ENCODE measurements at regions of chr6 and their contacts with region 1.

Region 1: GRCh38 chr6:155174576-155175211 is 89.1 kb upstream of the CLDN20 start:
- DNase-seq: peak; percentile 79
- ATAC-seq: peak; percentile 55
- H3K4me3 Mint-ChIP-seq: no peak overlapping the region
- H3K27ac Mint-ChIP-seq: peak overlapping the region; percentile 33
- H3K4me1 Mint-ChIP-seq: peaks cover 46% of the 10 kb centered on the region
- H3K27me3 Mint-ChIP-seq: no peaks in the 10 kb centered on the region
- CTCF ChIP-seq: peak; percentile 75

Region 2: DNA sequence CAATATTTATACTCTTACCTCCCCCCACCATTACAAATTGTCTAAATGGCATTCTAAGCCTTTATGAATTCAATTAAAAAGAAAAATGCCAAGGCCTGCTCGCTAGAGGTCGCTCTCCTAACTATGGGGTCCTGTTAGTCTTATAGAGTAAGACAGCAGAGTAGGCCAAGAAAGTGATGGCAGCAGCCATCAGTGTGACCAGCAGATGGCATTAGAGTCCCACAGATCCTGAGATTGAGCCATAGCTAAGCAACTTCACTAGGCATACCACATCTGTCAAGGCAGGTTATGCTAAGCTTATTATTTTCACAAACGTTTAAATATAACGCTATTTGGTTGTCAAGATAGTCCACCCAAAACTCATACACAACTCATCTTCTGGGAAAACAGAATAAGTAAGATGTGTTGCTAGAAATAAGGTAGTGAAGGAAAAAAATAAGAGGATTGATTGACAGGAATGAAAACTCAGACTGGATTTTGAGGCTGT is 499.0 kb before region 1 on chr6:
- CTCF ChIA-PET with region 1: interaction called, 8 read pairs
- POLR2A ChIA-PET with region 1: no interaction called
- intact Hi-C with region 1: loop called (anchors 5 kb)
- DNase-seq: peak; percentile 95
- ATAC-seq: peak; percentile 100
- H3K4me3 Mint-ChIP-seq: no peak overlapping the region
- H3K27ac Mint-ChIP-seq: no peak overlapping the region
- H3K4me1 Mint-ChIP-seq: no peaks in the 10 kb centered on the region
- H3K27me3 Mint-ChIP-seq: no peaks in the 10 kb centered on the region
- CTCF ChIP-seq: peak; percentile 99

Region 3: GRCh38 chr6:154882107-154882506 is 292.6 kb before region 1 on chr6:
- CTCF ChIA-PET with region 1: no interaction called
- POLR2A ChIA-PET with region 1: no interaction called
- intact Hi-C with region 1: no loop called
- DNase-seq: no peak
- ATAC-seq: no peak
- H3K4me3 Mint-ChIP-seq: no peak overlapping the region
- H3K27ac Mint-ChIP-seq: no peak overlapping the region
- H3K4me1 Mint-ChIP-seq: peaks cover 3% of the 10 kb centered on the region
- H3K27me3 Mint-ChIP-seq: no peaks in the 10 kb centered on the region
- CTCF ChIP-seq: no peak

Region 4: DNA sequence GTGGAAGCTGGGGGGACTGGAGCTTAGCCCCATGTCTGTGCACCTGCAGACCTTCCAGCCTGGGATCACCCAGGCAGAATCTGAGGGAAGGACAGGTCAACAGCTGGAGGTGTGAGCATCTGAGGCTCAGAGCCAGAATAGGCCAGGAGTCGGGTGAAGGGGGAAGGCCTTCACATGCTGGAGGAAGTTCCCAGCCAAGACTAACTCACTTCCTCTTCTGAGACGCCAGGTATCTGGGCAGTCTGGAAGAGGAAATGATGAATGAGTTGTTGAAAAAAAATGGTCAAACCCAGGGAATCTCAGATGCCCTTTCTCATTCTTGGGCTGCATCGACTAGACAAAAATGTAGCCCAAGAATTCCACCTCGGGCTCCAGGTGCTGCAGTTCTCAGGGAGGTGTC is 253.2 kb before region 1 on chr6:
- CTCF ChIA-PET with region 1: interaction called, 69 read pairs
- POLR2A ChIA-PET with region 1: interaction called, 4 read pairs
- intact Hi-C with region 1: no loop called
- DNase-seq: no peak
- ATAC-seq: no peak
- H3K4me3 Mint-ChIP-seq: no peak overlapping the region
- H3K27ac Mint-ChIP-seq: no peak overlapping the region
- H3K4me1 Mint-ChIP-seq: peaks cover 12% of the 10 kb centered on the region
- H3K27me3 Mint-ChIP-seq: no peaks in the 10 kb centered on the region
- CTCF ChIP-seq: no peak

Region 5: GRCh38 chr6:155100087-155100486 is 74.6 kb before region 1 on chr6:
- CTCF ChIA-PET with region 1: no interaction called
- POLR2A ChIA-PET with region 1: no interaction called
- intact Hi-C with region 1: no loop called
- DNase-seq: no peak
- ATAC-seq: no peak
- H3K4me3 Mint-ChIP-seq: no peak overlapping the region
- H3K27ac Mint-ChIP-seq: no peak overlapping the region
- H3K4me1 Mint-ChIP-seq: peaks cover 8% of the 10 kb centered on the region
- H3K27me3 Mint-ChIP-seq: peaks cover 4% of the 10 kb centered on the region
- CTCF ChIP-seq: no peak

Region 6: DNA sequence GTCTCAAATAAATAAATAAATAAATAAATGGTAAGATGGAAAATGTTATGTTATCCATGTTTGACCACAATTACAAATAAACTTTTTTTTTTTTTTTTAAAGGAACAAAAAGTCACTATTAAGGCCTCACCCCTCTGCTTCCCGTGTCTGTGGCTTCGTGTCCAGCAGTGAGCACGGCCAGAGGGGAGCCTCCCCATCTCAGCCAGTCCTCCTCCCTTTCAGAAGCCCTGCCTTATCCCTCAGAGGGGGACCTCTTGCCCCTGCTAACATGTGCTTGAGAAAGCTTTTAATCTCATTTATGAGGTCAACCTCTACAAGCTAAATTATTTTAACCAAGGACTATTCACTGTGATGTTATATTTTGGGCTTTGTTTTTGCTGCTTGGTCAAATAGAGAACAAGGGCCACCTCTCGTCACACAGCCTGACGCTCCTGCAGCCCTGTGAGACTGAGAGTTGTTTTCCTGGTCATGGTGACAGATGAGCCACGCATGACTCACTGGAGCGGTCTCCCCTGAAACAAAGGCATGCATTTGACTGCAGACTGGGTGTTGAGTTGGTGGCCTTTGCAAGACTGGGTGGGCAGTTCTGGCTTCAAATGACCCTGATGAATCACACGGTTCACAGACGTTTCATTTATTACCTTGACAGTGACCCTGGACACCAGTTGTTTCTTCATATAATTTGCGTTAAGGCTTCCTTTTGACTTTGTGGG is 47.8 kb before region 1 on chr6:
- CTCF ChIA-PET with region 1: interaction called, 5 read pairs
- POLR2A ChIA-PET with region 1: no interaction called
- intact Hi-C with region 1: loop called (anchors 5 kb)
- DNase-seq: peak; percentile 86
- ATAC-seq: peak; percentile 93
- H3K4me3 Mint-ChIP-seq: no peak overlapping the region
- H3K27ac Mint-ChIP-seq: peak overlapping the region; percentile 81
- H3K4me1 Mint-ChIP-seq: peaks cover 33% of the 10 kb centered on the region
- H3K27me3 Mint-ChIP-seq: no peaks in the 10 kb centered on the region
- CTCF ChIP-seq: no peak

Region 7: DNA sequence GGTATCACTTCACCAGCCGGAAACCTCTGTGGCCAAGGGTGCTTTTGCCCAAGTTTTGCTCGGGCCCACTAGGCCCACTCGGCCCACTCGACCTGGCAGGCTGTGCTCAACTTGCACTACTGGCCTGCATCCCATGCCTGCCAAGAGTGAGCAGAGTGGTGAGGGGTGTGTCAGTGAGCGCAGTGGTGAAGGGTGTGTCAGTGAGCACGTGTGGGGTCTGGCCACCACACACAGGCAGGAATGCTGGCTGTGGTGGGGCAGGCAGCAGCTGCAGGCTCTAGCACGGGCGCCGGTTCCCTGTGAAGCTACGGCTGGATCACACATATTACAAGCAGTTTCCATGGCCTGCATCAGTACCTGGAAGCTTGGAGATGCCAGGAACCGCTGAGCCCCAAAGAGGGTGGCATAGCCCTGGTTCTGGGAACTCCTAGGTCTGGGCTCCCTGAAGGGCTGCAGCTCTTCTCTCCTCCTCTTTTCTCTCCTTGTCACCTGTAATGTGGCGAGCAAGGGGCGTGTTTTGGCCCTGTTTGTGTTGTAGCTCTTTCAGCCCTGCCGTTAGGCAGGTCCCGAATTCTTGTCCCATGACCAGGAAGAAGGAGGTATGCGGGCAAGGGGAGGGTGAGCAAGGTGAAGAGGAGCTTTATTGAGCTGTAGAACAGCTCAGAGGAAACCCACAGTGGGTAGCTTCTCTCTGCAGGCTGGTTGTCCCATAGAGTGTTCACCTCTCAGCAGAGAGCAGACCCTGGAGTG is 38.1 kb after region 1 on chr6:
- CTCF ChIA-PET with region 1: no interaction called
- POLR2A ChIA-PET with region 1: no interaction called
- intact Hi-C with region 1: no loop called
- DNase-seq: no peak
- ATAC-seq: no peak
- H3K4me3 Mint-ChIP-seq: no peak overlapping the region
- H3K27ac Mint-ChIP-seq: no peak overlapping the region
- H3K4me1 Mint-ChIP-seq: no peaks in the 10 kb centered on the region
- H3K27me3 Mint-ChIP-seq: peaks cover 5% of the 10 kb centered on the region
- CTCF ChIP-seq: no peak

Region 8: GRCh38 chr6:155248008-155249001 is 73.6 kb after region 1 on chr6:
- CTCF ChIA-PET with region 1: interaction called, 27 read pairs
- POLR2A ChIA-PET with region 1: no interaction called
- intact Hi-C with region 1: loop called (anchors 5 kb)
- DNase-seq: peak; percentile 35
- ATAC-seq: no peak
- H3K4me3 Mint-ChIP-seq: no peak overlapping the region
- H3K27ac Mint-ChIP-seq: peak overlapping the region; percentile 1
- H3K4me1 Mint-ChIP-seq: no peaks in the 10 kb centered on the region
- H3K27me3 Mint-ChIP-seq: no peaks in the 10 kb centered on the region
- CTCF ChIP-seq: peak; percentile 38

Region 9: DNA sequence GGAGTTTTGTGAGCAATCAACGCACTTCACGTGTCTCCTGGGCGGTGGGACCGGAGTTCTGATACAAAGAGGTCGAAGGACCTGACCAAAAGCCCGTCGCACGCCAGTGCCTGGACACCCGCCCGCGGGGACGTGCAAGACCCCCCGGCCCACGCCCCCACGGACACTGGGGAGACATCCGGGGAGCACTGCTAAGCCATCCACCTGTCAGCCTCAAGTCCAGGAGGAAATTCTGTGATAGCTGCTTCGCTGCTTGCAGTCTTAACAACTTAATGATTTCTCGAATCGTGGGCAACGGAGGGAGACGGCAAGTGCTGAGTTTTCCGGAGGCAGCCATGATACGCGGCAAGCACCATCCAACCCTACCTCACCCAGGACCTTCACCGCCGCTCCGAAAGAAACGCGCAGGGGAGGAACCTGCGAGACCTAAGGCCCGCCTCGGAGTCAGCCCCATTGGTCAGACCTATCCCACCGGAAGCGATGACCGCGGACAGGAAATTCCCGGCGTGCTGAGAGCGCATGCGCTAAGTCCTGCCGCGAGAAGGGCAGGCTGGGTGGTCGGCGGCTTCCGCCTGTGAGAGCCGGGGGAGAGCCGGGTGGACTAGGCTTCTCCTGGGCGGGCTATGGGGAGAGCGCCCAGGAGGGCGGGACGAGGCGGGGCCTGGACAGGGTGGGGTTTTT is 139.5 kb after region 1 on chr6 and contains the start of gene TFB1M:
- CTCF ChIA-PET with region 1: interaction called, 22 read pairs
- POLR2A ChIA-PET with region 1: interaction called, 4 read pairs
- intact Hi-C with region 1: loop called (anchors 5 kb)
- DNase-seq: peak; percentile 99
- ATAC-seq: peak; percentile 96
- H3K4me3 Mint-ChIP-seq: peak within 1 kb of the TSS; percentile 98
- H3K27ac Mint-ChIP-seq: peak within 1 kb of the TSS; percentile 99
- H3K4me1 Mint-ChIP-seq: peaks cover 38% of the 10 kb centered on the region
- H3K27me3 Mint-ChIP-seq: no peaks in the 10 kb centered on the region
- CTCF ChIP-seq: no peak
- total RNA-seq, gene TFB1M: 70.9 to 76.6 TPM